ENCODE measurements at regions of chr3 and their contacts with region 1.

Region 1: GRCh38 chr3:128680602-128681368 is 30.2 kb upstream of the RPN1 start:
- DNase-seq: peak; percentile 95 to 98 (median 97)
- ATAC-seq: peak; percentile 89
- H3K4me3 ChIP-seq: peak overlapping the region; percentile 70 to 82
- H3K4me3 Mint-ChIP-seq: peak overlapping the region; percentile 90
- H3K27ac ChIP-seq: peak overlapping the region; percentile 93 to 98
- H3K27ac Mint-ChIP-seq: peak overlapping the region; percentile 99
- H3K4me1 ChIP-seq: peaks cover 14% of the 10 kb centered on the region
- H3K4me1 Mint-ChIP-seq: peaks cover 29% of the 10 kb centered on the region
- H3K27me3 ChIP-seq: no peaks in the 10 kb centered on the region
- H3K27me3 Mint-ChIP-seq: no peaks in the 10 kb centered on the region
- CTCF ChIP-seq: peak; percentile 86

Region 2: GRCh38 chr3:128650096-128651050 is 30.4 kb before region 1 on chr3 and contains the start of gene RPN1:
- CTCF ChIA-PET with region 1: interaction called, 10 read pairs
- POLR2A ChIA-PET with region 1: interaction called, 19 read pairs
- intact Hi-C with region 1: loop called (anchors 1 kb)
- DNase-seq: peak; percentile 90 to 97 (median 95)
- ATAC-seq: peak; percentile 96
- H3K4me3 ChIP-seq: peak within 1 kb of the TSS; percentile 97
- H3K4me3 Mint-ChIP-seq: peak within 1 kb of the TSS; percentile 82
- H3K27ac ChIP-seq: peak within 1 kb of the TSS; percentile 95 to 96
- H3K27ac Mint-ChIP-seq: peak within 1 kb of the TSS; percentile 88
- H3K4me1 ChIP-seq: peaks cover 24% of the 10 kb centered on the region
- H3K4me1 Mint-ChIP-seq: peaks cover 47% of the 10 kb centered on the region
- H3K27me3 ChIP-seq: no peaks in the 10 kb centered on the region
- H3K27me3 Mint-ChIP-seq: no peaks in the 10 kb centered on the region
- CTCF ChIP-seq: no peak
- total RNA-seq, gene RPN1: 65.7 to 76.5 TPM

Region 3: GRCh38 chr3:128698211-128699064 is 17.7 kb after region 1 on chr3:
- CTCF ChIA-PET with region 1: interaction called, 16 read pairs
- POLR2A ChIA-PET with region 1: interaction called, 5 read pairs
- intact Hi-C with region 1: loop called in 1 of 2 experiments (anchors 2 kb)
- DNase-seq: peak in 5 of 9 experiments; percentile 15 to 56 (median 27)
- ATAC-seq: peak; percentile 61
- H3K4me3 ChIP-seq: peak overlapping the region; percentile 47 to 58
- H3K4me3 Mint-ChIP-seq: peak overlapping the region; percentile 79
- H3K27ac ChIP-seq: no peak overlapping the region
- H3K27ac Mint-ChIP-seq: no peak overlapping the region
- H3K4me1 ChIP-seq: no peaks in the 10 kb centered on the region
- H3K4me1 Mint-ChIP-seq: peaks cover 3% of the 10 kb centered on the region
- H3K27me3 ChIP-seq: peaks cover 0 to 11% of the 10 kb centered on the region in 2 experiments
- H3K27me3 Mint-ChIP-seq: peaks cover 4% of the 10 kb centered on the region
- CTCF ChIP-seq: no peak

Region 4: DNA sequence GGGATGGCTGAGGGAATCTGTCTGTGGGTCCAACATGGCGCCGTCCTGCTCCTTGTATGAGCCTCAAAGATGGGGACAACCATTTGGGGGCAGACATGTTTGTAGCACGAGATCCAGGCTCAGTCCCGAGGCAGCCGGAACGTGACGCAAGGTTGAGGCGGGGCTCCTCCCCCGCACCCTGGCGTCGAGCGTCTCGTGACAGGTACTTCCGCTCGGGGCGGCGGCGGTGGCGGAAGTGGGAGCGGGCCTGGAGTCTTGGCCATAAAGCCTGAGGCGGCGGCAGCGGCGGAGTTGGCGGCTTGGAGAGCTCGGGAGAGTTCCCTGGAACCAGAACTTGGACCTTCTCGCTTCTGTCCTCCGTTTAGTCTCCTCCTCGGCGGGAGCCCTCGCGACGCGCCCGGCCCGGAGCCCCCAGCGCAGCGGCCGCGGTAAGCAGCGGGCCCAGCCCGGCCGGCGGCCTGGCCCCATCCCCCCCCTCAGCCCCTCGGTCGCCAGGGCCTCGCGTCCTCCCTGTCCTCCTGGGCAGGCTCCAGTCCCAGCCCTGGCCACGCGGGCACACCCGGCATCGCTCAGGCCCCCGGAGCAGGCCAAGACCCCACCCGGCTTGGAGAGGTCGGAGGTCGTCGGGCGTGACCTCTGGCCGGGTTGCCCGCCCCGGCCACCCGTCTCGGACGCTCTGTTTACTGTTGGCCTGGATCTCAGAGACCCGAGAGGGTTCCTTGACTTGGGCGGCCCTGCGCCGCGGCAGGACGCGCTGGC is 45.3 kb after region 1 on chr3 and contains the start of gene RAB7A:
- CTCF ChIA-PET with region 1: interaction called, 24 read pairs
- POLR2A ChIA-PET with region 1: interaction called, 20 read pairs
- intact Hi-C with region 1: loop called (anchors 1 kb)
- DNase-seq: peak; percentile 95 to 99 (median 97)
- ATAC-seq: peak; percentile 98
- H3K4me3 ChIP-seq: peak within 1 kb of the TSS; percentile 82 to 83
- H3K4me3 Mint-ChIP-seq: peak within 1 kb of the TSS; percentile 97
- H3K27ac ChIP-seq: peak within 1 kb of the TSS; percentile 92
- H3K27ac Mint-ChIP-seq: peak within 1 kb of the TSS; percentile 95
- H3K4me1 ChIP-seq: peaks cover 41% of the 10 kb centered on the region
- H3K4me1 Mint-ChIP-seq: peaks cover 53% of the 10 kb centered on the region
- H3K27me3 ChIP-seq: no peaks in the 10 kb centered on the region
- H3K27me3 Mint-ChIP-seq: no peaks in the 10 kb centered on the region
- CTCF ChIP-seq: no peak
- total RNA-seq, gene RAB7A: 130 to 134 TPM

Region 5: GRCh38 chr3:128787256-128788240 is 106.8 kb after region 1 on chr3:
- CTCF ChIA-PET with region 1: interaction called, 88 read pairs
- POLR2A ChIA-PET with region 1: interaction called, 29 read pairs
- intact Hi-C with region 1: no loop called
- DNase-seq: peak in 5 of 9 experiments; percentile 34 to 70 (median 62)
- ATAC-seq: peak; percentile 60
- H3K4me3 ChIP-seq: peak overlapping the region in 1 of 2 experiments; percentile 36
- H3K4me3 Mint-ChIP-seq: peak overlapping the region; percentile 70
- H3K27ac ChIP-seq: peak overlapping the region; percentile 49 to 83
- H3K27ac Mint-ChIP-seq: peak overlapping the region; percentile 91
- H3K4me1 ChIP-seq: peaks cover 77% of the 10 kb centered on the region
- H3K4me1 Mint-ChIP-seq: peaks cover 88% of the 10 kb centered on the region
- H3K27me3 ChIP-seq: no peaks in the 10 kb centered on the region
- H3K27me3 Mint-ChIP-seq: no peaks in the 10 kb centered on the region
- CTCF ChIP-seq: peak; percentile 51

Region 6: GRCh38 chr3:128804017-128804810 is 123.4 kb after region 1 on chr3:
- CTCF ChIA-PET with region 1: interaction called, 24 read pairs
- POLR2A ChIA-PET with region 1: interaction called, 25 read pairs
- intact Hi-C with region 1: no loop called
- DNase-seq: peak in 8 of 9 experiments; percentile 26 to 92 (median 56)
- ATAC-seq: peak; percentile 95
- H3K4me3 ChIP-seq: peak overlapping the region; percentile 21 to 36
- H3K4me3 Mint-ChIP-seq: peak overlapping the region; percentile 75
- H3K27ac ChIP-seq: peak overlapping the region; percentile 66 to 84
- H3K27ac Mint-ChIP-seq: peak overlapping the region; percentile 97
- H3K4me1 ChIP-seq: peaks cover 49% of the 10 kb centered on the region
- H3K4me1 Mint-ChIP-seq: peaks cover 69% of the 10 kb centered on the region
- H3K27me3 ChIP-seq: no peaks in the 10 kb centered on the region
- H3K27me3 Mint-ChIP-seq: no peaks in the 10 kb centered on the region
- CTCF ChIP-seq: no peak

Region 7: DNA sequence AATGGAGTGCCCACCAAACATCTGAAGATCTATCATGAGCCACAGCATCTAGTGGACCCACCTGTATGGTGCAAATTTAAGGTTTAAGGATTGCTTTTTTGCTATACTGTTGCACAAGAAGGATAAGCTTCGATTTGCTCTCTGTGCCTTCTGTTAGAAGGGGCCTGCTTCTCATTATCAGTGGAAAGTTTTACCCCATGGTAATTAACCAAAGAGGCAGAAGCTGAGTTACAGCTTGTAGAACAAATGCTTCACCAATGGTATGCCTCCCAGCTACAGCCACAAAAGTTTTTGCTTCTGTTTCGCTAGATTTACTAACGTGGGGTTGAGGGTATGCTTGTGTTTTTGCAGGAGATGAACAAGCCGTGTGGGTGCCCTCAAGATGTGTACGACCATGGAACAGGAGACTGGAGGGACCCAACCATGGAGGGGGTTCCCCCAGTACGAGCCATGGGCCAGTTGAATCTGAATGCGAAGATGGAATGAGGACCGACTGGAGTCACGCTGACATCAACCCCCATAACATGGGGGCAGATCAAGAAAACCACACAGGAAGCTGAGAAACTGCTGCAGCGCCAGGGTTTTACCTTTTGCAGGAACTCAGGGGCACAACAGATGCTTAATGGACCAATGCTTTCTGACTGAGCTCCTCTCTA is 242.1 kb after region 1 on chr3:
- CTCF ChIA-PET with region 1: interaction called, 6 read pairs
- POLR2A ChIA-PET with region 1: interaction called, 8 read pairs
- intact Hi-C with region 1: loop called in 1 of 2 experiments (anchors 2 kb)
- DNase-seq: peak; percentile 16 to 83 (median 58)
- ATAC-seq: peak; percentile 85
- H3K4me3 ChIP-seq: peak overlapping the region; percentile 34 to 37
- H3K4me3 Mint-ChIP-seq: peak overlapping the region; percentile 84
- H3K27ac ChIP-seq: peak overlapping the region; percentile 34 to 52
- H3K27ac Mint-ChIP-seq: peak overlapping the region; percentile 90
- H3K4me1 ChIP-seq: peaks cover 19% of the 10 kb centered on the region
- H3K4me1 Mint-ChIP-seq: peaks cover 36% of the 10 kb centered on the region
- H3K27me3 ChIP-seq: no peaks in the 10 kb centered on the region
- H3K27me3 Mint-ChIP-seq: no peaks in the 10 kb centered on the region
- CTCF ChIP-seq: no peak